Stomach (tissue), 19 donors: ENCODE measurements at regions of chr6 and their contacts with region 1.

Region 1: GRCh38 chr6:120451508-120451907 is 882.8 kb downstream of the TBC1D32 start:
- DNase-seq: no peak
- H3K4me3 ChIP-seq: no peak overlapping the region
- H3K27ac ChIP-seq: no peak overlapping the region
- H3K4me1 ChIP-seq: no peaks in the 10 kb centered on the region
- H3K27me3 ChIP-seq: no peaks in the 10 kb centered on the region
- CTCF ChIP-seq: no peak
- EP300 ChIP-seq: no peak
- POLR2A ChIP-seq: no peak

Region 2: GRCh38 chr6:120230010-120230409 is 221.5 kb before region 1 on chr6:
- intact Hi-C with region 1: loop called (anchors 5 kb)
- DNase-seq: no peak
- H3K4me3 ChIP-seq: no peak overlapping the region
- H3K27ac ChIP-seq: no peak overlapping the region
- H3K4me1 ChIP-seq: no peaks in the 10 kb centered on the region
- H3K27me3 ChIP-seq: no peaks in the 10 kb centered on the region
- CTCF ChIP-seq: peak in 1 of 7 experiments; percentile 7
- EP300 ChIP-seq: no peak
- POLR2A ChIP-seq: no peak

Region 3: GRCh38 chr6:120248451-120248850 is 203.1 kb before region 1 on chr6:
- intact Hi-C with region 1: no loop called
- DNase-seq: peak in 1 of 2 donors; percentile 10
- H3K4me3 ChIP-seq: no peak overlapping the region
- H3K27ac ChIP-seq: no peak overlapping the region
- H3K4me1 ChIP-seq: no peaks in the 10 kb centered on the region
- H3K27me3 ChIP-seq: no peaks in the 10 kb centered on the region
- CTCF ChIP-seq: no peak
- EP300 ChIP-seq: no peak
- POLR2A ChIP-seq: no peak